ENCODE measurements at regions of chr16 and their contacts with region 1.

Region 1: DNA sequence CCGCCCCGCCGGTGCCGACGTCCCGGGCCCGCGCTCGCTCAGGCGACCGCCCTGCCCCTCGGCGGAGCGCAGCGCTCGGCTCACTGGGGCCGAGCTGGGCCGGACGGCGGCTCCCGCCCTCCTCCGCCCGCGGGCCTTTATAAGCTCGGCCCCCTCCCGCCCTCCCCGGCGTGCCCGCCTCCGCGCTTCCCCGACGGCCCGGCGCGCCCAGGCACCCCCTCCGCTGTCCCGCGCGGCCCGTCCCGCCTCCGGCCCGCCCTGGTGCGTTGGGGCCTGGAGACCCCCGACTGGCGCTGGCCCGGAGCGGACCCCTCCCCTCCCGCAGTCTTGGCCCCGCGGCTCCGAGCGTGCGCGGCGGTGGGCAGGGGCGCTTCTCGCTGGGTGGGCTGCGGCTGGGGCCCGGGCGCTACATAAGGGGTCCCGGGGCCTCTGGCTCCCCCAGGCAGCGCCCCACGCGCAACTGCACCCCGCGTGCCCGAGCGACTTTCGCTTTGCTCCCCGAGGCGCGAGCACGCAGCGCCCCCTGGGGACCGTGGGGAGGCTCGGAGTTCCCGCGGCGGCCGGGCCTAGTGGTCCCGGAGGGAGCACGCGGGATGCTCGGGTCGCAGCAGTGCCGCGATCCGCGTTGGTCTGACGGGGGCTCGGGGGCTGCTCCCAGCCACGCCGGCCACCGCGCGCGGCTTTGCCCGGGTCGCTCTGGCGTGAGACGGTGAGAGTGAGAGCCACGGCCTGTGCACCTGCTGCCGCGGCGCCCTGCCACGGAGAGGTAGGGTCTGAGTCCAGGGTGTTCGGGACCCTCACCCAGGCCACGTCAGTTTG is at the start of gene PIEZO1:
- DNase-seq: peak; percentile 72
- ATAC-seq: peak; percentile 3
- H3K4me3 Mint-ChIP-seq: peak within 1 kb of the TSS; percentile 68
- H3K27ac Mint-ChIP-seq: peak within 1 kb of the TSS; percentile 83
- H3K4me1 Mint-ChIP-seq: peaks cover 42% of the 10 kb centered on the region
- H3K27me3 Mint-ChIP-seq: no peaks in the 10 kb centered on the region
- CTCF ChIP-seq: peak; percentile 90
- total RNA-seq, gene PIEZO1: 87.7 to 91.8 TPM

Region 2: DNA sequence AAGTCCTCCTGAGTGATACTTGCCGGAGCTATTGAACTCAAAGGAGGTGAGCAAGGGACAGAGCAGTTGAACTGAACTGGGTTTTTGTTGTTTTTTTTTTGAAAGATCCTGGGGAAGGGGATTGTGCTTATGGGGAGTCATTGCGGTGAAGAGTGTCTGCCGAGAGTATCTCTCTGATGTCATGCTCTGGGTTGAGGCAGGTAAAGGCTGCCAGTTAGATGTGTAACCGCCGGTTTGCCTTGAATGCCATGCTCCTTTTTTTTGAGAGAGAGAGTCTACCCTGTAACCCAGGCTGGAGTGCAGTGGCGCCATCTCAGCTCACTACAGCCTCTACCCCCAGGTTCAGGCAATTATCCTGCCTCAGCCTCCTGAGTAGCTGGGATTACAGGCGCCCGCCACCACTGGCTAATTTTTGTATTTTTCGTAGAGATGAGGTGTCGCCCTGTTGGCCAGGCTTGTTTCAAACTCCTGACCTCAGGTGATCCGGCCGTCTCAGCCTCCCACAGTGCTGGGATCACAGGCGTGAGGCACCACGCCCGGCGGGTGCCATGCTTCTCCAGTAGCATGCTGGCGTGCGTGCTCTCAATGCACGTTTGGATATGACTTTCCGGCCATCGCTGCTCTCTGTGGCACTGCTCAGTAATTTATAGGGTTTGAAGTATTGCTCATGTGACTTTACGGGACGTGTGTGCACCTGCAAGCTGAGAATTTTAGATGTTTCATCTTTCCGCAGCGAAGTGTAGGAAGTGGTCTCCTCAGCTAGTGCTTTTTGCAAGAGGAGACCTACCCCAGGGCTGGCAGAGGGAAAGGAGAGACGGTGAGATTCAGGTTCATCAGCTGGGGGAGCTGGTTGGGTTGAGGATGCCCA is 206.6 kb before region 1 on chr16:
- CTCF ChIA-PET with region 1: no interaction called
- POLR2A ChIA-PET with region 1: no interaction called
- intact Hi-C with region 1: no loop called
- DNase-seq: peak; percentile 31
- ATAC-seq: peak; percentile 38
- H3K4me3 Mint-ChIP-seq: peak overlapping the region; percentile 44
- H3K27ac Mint-ChIP-seq: peak overlapping the region; percentile 58
- H3K4me1 Mint-ChIP-seq: peaks cover 55% of the 10 kb centered on the region
- H3K27me3 Mint-ChIP-seq: no peaks in the 10 kb centered on the region
- CTCF ChIP-seq: no peak

Region 3: GRCh38 chr16:88743693-88744576 is 41.4 kb before region 1 on chr16:
- CTCF ChIA-PET with region 1: interaction called, 24 read pairs
- POLR2A ChIA-PET with region 1: interaction called, 3 read pairs
- intact Hi-C with region 1: loop called (anchors 5 kb)
- DNase-seq: peak; percentile 79
- ATAC-seq: peak; percentile 22
- H3K4me3 Mint-ChIP-seq: no peak overlapping the region
- H3K27ac Mint-ChIP-seq: no peak overlapping the region
- H3K4me1 Mint-ChIP-seq: peaks cover 24% of the 10 kb centered on the region
- H3K27me3 Mint-ChIP-seq: no peaks in the 10 kb centered on the region
- CTCF ChIP-seq: peak; percentile 95

Region 4: DNA sequence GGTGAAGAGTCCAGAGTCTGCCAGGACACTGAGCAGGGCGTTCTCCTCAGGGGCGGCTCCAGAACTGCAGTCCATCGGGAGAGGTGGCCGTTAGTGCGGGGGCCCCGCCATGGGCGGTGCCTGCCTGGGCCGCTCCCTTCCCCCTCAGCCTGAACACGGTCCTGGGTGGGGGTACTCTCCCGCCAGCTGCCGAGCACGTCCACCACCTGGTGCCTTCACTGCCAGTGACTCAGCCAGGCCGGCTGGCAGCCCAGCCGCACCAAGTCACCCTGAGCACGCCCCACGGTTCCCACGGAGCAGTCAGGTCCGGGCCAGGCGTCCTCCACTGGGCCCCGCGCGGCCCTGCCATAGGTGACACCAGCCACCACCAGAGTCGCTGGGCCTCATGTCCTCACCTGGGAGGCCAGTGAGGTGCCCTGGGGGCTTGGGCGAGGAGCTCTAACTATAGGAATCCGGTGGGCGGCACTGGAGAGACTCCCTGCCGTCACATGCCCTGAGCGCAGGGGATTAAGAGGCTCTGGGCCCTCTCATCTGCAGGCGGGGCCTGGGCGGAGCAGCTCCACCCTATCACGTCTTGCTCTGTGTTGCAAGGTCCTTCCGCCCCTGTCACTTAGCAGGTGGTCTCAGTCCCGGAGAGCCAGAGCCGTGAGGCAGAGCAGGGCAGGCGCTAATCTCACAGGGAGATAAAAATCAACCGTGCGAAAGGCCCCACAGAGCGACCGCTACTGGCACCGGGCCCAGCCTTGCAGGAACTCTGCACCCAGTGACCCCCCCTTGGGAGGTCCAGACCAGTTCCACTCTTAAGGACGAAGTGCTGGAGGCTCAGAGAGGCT is 14.6 kb before region 1 on chr16:
- CTCF ChIA-PET with region 1: interaction called, 4 read pairs
- POLR2A ChIA-PET with region 1: interaction called, 10 read pairs
- intact Hi-C with region 1: no loop called
- DNase-seq: peak; percentile 78
- ATAC-seq: peak; percentile 90
- H3K4me3 Mint-ChIP-seq: peak overlapping the region; percentile 12
- H3K27ac Mint-ChIP-seq: peak overlapping the region; percentile 64
- H3K4me1 Mint-ChIP-seq: peaks cover 33% of the 10 kb centered on the region
- H3K27me3 Mint-ChIP-seq: no peaks in the 10 kb centered on the region
- CTCF ChIP-seq: no peak

Region 5: GRCh38 chr16:88811769-88812512 is 26.6 kb after region 1 on chr16 and contains the start of gene APRT:
- CTCF ChIA-PET with region 1: interaction called, 4 read pairs
- POLR2A ChIA-PET with region 1: interaction called, 81 read pairs
- intact Hi-C with region 1: no loop called
- DNase-seq: peak; percentile 95
- ATAC-seq: peak; percentile 86
- H3K4me3 Mint-ChIP-seq: peak within 1 kb of the TSS; percentile 91
- H3K27ac Mint-ChIP-seq: peak within 1 kb of the TSS; percentile 98
- H3K4me1 Mint-ChIP-seq: peaks cover 14% of the 10 kb centered on the region
- H3K27me3 Mint-ChIP-seq: no peaks in the 10 kb centered on the region
- CTCF ChIP-seq: no peak
- total RNA-seq, gene APRT: 236 to 240 TPM